ENCODE measurements at regions of chr9 and their contacts with region 1.

Region 1: DNA sequence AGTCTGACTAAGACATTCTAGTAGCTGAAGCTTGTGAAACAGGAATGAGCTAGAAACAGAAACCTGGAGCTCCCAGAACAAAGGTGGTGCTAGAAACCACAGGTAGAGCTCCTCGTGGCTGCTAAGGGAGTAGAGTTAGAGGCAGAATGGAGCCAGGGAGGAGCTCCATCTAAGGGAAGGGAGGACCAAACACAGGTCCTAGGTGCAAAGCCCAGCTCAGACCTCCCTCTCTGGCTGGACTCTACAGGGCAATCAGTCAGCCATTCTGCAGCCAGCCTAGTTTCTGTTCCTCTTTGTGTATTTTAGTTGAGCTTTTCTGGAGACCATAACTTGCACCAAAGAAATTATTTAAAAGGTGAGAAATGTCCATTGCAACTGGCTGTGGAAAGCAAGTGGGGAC is 70.4 kb downstream of the CRB2 start:
- DNase-seq: no peak
- ATAC-seq: peak; percentile 14; the same call in 1 of the 2 replicates
- H3K4me3 Mint-ChIP-seq: no peak overlapping the region
- H3K27ac Mint-ChIP-seq: no peak overlapping the region
- H3K4me1 Mint-ChIP-seq: peaks cover 25% of the 10 kb centered on the region
- H3K27me3 Mint-ChIP-seq: no peaks in the 10 kb centered on the region; the same call in 1 of the 2 replicates
- CTCF ChIP-seq: no peak

Region 2: DNA sequence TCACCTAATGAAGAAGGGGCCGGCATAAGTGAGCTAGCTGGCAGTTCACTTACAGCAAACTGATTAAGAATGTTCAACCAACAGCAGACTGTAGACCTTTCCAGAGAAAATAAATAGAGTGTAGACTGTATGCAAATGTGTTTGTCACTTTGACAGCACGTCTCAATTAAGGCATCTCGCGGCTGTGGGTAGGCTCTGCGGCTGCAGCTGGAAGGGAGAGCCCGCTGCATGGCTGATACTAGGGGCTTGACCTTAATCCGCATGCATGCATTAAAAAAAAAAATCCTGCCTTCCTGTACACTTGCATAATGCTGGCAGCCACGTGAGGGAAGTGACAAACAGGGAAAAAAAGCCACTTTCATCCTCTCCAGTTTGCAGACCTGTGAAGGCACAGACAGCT is 11.9 kb after region 1 on chr9:
- CTCF ChIA-PET with region 1: interaction called, 11 read pairs
- POLR2A ChIA-PET with region 1: interaction called, 3 read pairs
- DNase-seq: no peak
- ATAC-seq: no peak
- H3K4me3 Mint-ChIP-seq: no peak overlapping the region
- H3K27ac Mint-ChIP-seq: no peak overlapping the region
- H3K4me1 Mint-ChIP-seq: peaks cover 23% of the 10 kb centered on the region
- H3K27me3 Mint-ChIP-seq: no peaks in the 10 kb centered on the region
- CTCF ChIP-seq: no peak

Region 3: DNA sequence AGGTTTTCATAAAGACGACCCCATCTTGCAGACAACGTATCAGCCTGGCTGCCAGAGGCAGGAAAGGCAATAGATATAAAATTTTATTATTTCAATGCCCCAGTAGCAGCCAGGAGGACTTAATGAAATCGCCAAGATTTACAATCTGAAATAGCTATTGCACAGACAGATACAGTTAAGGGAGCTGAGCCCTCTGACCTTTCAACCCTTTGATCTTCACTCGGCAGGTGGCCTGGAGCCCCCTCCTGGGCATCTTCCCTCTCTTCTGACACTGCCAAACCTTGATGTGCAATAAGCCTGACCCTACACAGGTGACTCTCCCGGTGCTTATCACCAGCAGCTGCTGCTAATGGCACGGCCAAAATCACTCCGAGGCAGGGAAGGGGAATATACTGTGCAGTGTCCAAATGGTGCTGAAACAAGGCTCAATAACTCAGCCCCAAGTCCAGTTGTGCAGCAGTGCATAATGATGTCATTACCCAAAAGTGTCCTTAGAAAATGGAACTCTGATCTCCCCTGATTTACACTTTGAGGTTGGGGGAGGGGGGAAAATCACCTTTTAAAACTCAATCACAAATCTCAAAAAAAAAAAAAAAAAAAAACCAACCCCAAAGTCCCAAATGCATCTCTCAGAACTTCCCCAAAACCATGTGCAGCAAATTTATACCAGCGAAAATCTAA is 171.6 kb after region 1 on chr9:
- CTCF ChIA-PET with region 1: no interaction called
- POLR2A ChIA-PET with region 1: no interaction called
- DNase-seq: no peak
- ATAC-seq: no peak
- H3K4me3 Mint-ChIP-seq: no peak overlapping the region
- H3K27ac Mint-ChIP-seq: no peak overlapping the region
- H3K4me1 Mint-ChIP-seq: peaks cover 24% of the 10 kb centered on the region
- H3K27me3 Mint-ChIP-seq: no peaks in the 10 kb centered on the region
- CTCF ChIP-seq: no peak